ENCODE measurements at regions of chr1 and their contacts with region 1.

Region 1: GRCh38 chr1:37741130-37741529 is 23.8 kb downstream of the EPHA10 start:
- DNase-seq: no peak
- H3K4me3 Mint-ChIP-seq: no peak overlapping the region
- H3K27ac Mint-ChIP-seq: no peak overlapping the region
- H3K4me1 Mint-ChIP-seq: no peaks in the 10 kb centered on the region
- H3K27me3 Mint-ChIP-seq: peaks cover 30% of the 10 kb centered on the region

Region 2: GRCh38 chr1:37661401-37661800 is 79.7 kb before region 1 on chr1:
- CTCF ChIA-PET with region 1: no interaction called
- POLR2A ChIA-PET with region 1: no interaction called
- DNase-seq: no peak
- H3K4me3 Mint-ChIP-seq: no peak overlapping the region
- H3K27ac Mint-ChIP-seq: no peak overlapping the region
- H3K4me1 Mint-ChIP-seq: no peaks in the 10 kb centered on the region
- H3K27me3 Mint-ChIP-seq: peaks cover 22% of the 10 kb centered on the region

Region 3: GRCh38 chr1:37705399-37705798 is 35.7 kb before region 1 on chr1:
- CTCF ChIA-PET with region 1: no interaction called
- POLR2A ChIA-PET with region 1: no interaction called
- DNase-seq: no peak
- H3K4me3 Mint-ChIP-seq: no peak overlapping the region
- H3K27ac Mint-ChIP-seq: no peak overlapping the region
- H3K4me1 Mint-ChIP-seq: no peaks in the 10 kb centered on the region
- H3K27me3 Mint-ChIP-seq: no peaks in the 10 kb centered on the region

Region 4: DNA sequence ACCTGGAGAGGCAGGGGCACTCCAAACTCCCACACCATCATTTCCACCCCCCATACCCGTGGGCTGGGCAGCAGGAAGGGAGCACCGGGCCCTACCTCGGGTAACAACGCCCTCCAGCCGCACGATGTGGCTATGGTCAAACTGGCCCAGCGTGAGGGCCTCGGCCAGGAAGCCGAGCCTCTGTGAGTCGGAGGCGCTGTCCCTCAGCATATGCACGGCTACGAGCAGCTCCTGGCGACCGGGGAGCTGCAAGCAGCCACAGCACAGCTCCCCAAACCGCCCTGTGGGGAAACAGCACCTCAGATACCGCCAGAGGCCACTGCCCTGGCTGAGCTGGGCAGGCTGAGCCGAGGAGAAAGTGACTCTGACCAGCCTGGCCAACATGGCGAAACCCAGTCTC is 19.6 kb before region 1 on chr1:
- CTCF ChIA-PET with region 1: no interaction called
- POLR2A ChIA-PET with region 1: no interaction called
- DNase-seq: no peak
- H3K4me3 Mint-ChIP-seq: no peak overlapping the region
- H3K27ac Mint-ChIP-seq: no peak overlapping the region
- H3K4me1 Mint-ChIP-seq: no peaks in the 10 kb centered on the region
- H3K27me3 Mint-ChIP-seq: peaks cover 4% of the 10 kb centered on the region

Region 5: DNA sequence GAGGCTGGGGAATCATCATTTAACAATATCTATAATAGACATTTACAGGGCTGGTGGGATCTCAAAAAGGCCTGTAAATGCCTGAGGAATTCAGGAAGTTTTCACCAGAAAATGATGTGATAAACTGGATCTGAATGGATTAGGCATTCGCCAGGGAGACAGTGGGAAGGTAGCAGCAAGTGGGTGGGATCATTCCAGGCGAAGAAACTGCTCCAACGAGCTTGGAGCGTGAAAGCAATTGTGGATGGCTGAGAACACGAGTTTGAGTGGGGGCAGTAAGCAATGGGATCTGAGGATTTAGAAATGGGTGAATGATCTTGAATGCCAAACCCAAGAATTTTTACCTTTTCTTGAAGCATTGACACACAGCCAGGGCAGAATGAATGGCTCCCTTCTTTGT is 1276.1 kb after region 1 on chr1:
- CTCF ChIA-PET with region 1: no interaction called
- POLR2A ChIA-PET with region 1: interaction called, 10 read pairs
- DNase-seq: no peak
- H3K4me3 Mint-ChIP-seq: no peak overlapping the region
- H3K27ac Mint-ChIP-seq: no peak overlapping the region
- H3K4me1 Mint-ChIP-seq: no peaks in the 10 kb centered on the region
- H3K27me3 Mint-ChIP-seq: peaks cover 2% of the 10 kb centered on the region